ENCODE measurements at regions of chr5 and their contacts with region 1.

Region 1: GRCh38 chr5:143271431-143271830 is 132.1 kb downstream of the NR3C1 start:
- DNase-seq: no peak
- ATAC-seq: no peak
- H3K4me3 ChIP-seq: no peak overlapping the region
- H3K27ac ChIP-seq: no peak overlapping the region
- H3K4me1 ChIP-seq: peaks cover 13% of the 10 kb centered on the region
- CTCF ChIP-seq: no peak
- EP300 ChIP-seq: no peak
- POLR2A ChIP-seq: no peak
- RAD21 ChIP-seq: no peak

Region 2: DNA sequence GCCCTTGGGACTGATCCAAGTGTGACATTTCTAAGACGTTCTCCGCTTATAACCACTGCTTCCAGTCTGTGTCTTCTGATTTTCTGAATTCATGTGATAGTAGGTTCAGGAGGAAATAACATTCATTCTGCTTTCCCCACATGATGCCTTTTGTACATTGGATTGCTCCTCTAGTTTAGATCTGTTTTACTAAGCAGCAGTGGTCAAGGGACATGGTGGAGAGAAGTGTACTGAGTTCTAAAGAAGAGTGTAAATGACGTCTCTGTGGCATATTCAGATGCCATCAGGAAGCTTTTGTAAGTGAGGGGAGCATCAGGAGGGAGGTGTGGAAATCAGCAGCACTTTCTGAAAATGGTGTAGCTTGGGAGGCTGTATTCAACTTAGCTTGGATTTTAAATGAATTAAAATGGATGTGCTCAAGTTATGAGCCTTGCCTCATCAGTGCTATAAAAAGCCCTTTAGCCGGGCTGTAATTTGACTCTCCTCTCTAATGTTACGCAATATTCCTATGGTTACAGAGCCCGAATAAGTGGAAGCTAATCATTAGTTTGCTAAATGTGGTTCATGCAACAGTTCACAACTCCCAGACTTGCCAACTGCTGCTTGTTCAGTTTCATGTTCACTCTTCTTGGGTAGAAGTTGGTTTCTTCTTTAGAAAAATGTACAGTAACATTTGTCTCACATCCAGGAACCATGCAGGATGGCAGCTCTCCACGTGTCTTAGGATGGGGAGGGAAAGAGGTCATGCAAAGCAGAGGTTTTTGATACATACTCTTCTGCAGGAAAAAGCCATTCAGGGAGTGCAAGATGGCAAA is 220.0 kb before region 1 on chr5:
- CTCF ChIA-PET with region 1: no interaction called
- POLR2A ChIA-PET with region 1: interaction called, 12 read pairs
- DNase-seq: no peak
- ATAC-seq: peak; percentile 24 to 35; a peak in 2 of 6 replicates
- H3K4me3 ChIP-seq: no peak overlapping the region
- H3K27ac ChIP-seq: peak overlapping the region in 1 of 2 experiments; percentile 44; a peak in 3 of 6 replicates
- H3K4me1 ChIP-seq: peaks cover 24% of the 10 kb centered on the region
- CTCF ChIP-seq: no peak
- EP300 ChIP-seq: no peak
- POLR2A ChIP-seq: no peak
- RAD21 ChIP-seq: no peak

Region 3: GRCh38 chr5:143142596-143143435 is 128.6 kb before region 1 on chr5:
- CTCF ChIA-PET with region 1: no interaction called
- POLR2A ChIA-PET with region 1: no interaction called
- DNase-seq: no peak
- ATAC-seq: no peak; a peak in 1 of 6 replicates
- H3K4me3 ChIP-seq: no peak overlapping the region
- H3K27ac ChIP-seq: peak overlapping the region in 1 of 2 experiments; percentile 22; a peak in 2 of 6 replicates
- H3K4me1 ChIP-seq: peaks cover 7% of the 10 kb centered on the region; the same call in 1 of the 3 replicates
- CTCF ChIP-seq: no peak
- EP300 ChIP-seq: no peak
- POLR2A ChIP-seq: no peak
- RAD21 ChIP-seq: no peak

Region 4: DNA sequence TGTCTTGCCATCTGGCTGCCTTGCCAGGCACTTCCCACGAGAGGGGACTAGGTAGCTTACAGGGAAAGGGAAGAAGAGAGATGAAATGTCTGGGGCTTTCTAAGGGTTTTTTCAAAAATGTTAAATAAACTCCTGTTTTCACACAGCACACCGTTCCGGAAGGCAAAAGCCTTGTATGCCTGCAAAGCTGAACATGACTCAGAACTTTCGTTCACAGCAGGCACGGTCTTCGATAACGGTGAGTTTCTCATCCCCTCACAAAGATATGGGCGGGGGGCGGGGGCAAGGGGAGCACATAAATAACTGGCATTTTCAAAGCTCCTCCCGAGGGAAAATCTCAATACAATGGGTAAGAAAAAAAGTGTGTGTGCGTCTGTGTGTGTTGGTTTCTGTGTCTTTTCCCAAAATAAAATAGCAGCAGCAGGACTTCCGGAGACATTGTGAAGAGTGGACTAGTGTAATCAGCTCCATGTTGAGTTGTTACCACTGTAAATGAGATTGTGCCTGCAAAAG is 57.5 kb before region 1 on chr5:
- CTCF ChIA-PET with region 1: no interaction called
- POLR2A ChIA-PET with region 1: no interaction called
- DNase-seq: no peak
- ATAC-seq: no peak
- H3K4me3 ChIP-seq: no peak overlapping the region
- H3K27ac ChIP-seq: peak overlapping the region in 1 of 2 experiments; percentile 21; a peak in 1 of 6 replicates
- H3K4me1 ChIP-seq: peaks cover 21% of the 10 kb centered on the region
- CTCF ChIP-seq: no peak
- EP300 ChIP-seq: no peak
- POLR2A ChIP-seq: no peak
- RAD21 ChIP-seq: no peak